ENCODE measurements at regions of chr17 and their contacts with region 1.

Region 1: DNA sequence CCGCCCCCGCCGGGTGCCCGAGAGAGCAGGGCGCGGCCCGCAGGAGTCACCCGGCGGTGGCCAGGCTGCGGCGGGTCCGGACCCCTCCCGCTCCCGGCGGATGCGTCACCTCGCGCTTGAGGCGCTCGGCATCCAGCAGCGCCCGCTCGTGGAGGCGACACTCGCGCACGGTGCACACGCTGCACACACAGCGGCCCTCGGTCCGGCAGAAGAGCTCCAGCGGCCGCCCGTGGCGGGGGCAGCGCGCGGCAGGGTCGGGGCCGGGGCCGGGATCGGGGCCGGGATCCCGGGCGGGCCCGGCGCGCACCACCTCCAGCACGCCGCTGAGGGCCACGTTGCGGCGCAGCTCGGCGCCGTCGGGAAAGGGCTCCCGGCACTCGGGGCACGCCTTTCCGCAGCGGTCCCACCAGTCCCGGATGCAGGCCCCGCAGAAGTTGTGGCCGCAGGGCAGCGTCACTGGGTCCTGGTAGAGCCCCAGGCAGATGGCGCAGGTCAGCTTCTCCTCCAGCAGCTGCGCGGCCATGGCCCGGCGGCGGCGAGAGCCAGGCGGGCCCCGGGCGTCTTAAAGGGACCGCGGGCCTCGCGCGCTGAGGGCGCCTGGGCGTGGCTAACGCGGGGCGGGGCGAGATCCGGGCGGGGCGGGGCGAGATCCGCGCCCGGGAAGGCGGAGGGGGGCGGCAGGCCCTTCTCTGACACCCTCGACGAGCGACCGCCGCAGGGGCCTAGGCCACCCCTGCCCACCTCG is at the start of gene TRIM65:
- DNase-seq: peak; percentile 69
- H3K4me3 ChIP-seq: peak within 1 kb of the TSS; percentile 50 to 58 (median 57)
- H3K27ac ChIP-seq: peak within 1 kb of the TSS; percentile 67
- H3K4me1 ChIP-seq: peaks cover 11% of the 10 kb centered on the region
- H3K27me3 ChIP-seq: no peaks in the 10 kb centered on the region
- CTCF ChIP-seq: peak; percentile 31 to 42
- POLR2A ChIP-seq: peak; percentile 79
- total RNA-seq, gene TRIM65: 28.1 and 33.5 TPM in 2 replicates

Region 2: GRCh38 chr17:75764711-75765421 is 131.7 kb before region 1 on chr17 and contains the start of gene GALK1:
- CTCF ChIA-PET with region 1: interaction called, 15 read pairs
- POLR2A ChIA-PET with region 1: no interaction called
- dilution Hi-C with region 1: no loop called
- intact Hi-C with region 1: no loop called
- DNase-seq: peak; percentile 66
- H3K4me3 ChIP-seq: peak within 1 kb of the TSS; percentile 44 to 62 (median 53)
- H3K27ac ChIP-seq: peak within 1 kb of the TSS; percentile 15
- H3K4me1 ChIP-seq: peaks cover 11% of the 10 kb centered on the region
- H3K27me3 ChIP-seq: no peaks in the 10 kb centered on the region
- CTCF ChIP-seq: peak in 1 of 2 donors; percentile 71
- POLR2A ChIP-seq: peak; percentile 34
- total RNA-seq, gene GALK1: 45.8 and 47.0 TPM in 2 replicates

Region 3: DNA sequence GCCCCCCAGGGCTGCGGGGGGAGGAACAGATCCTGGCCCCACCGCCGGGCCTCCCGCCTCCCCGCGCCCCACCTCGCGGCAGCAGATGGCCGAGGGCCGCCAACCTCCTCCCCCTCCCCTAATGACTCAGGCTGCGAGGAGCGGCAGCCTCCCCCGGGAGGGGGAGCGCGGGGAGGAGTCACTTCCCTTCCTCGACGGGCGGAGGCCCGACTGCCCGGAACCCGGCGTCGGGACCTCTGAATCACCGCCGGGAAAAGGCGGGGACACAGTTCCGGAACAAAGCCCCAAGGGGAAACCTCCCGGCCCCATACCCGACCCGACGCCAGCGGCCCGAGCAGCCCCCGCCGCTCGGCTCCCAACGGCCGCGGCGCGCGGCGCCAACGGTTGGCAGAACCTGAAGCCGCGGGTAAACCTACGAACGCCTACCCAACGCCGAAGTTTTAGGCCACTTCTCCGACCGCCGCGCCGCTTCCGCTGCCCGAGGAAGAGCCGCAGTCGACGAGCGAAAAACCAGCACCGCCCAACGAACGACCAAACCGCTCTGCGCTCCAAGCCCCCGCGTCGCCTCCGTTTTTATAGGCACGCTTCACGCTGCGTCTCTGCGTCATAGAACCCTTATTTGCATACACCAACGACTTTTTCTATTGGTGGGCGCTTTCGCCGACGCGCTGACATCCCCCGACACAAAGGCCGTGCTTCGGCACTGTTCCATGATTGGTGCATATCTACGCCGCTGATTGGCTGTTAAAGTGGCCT is 117.2 kb before region 1 on chr17:
- CTCF ChIA-PET with region 1: interaction called, 5 read pairs
- POLR2A ChIA-PET with region 1: interaction called, 4 read pairs
- dilution Hi-C with region 1: no loop called
- intact Hi-C with region 1: loop called (anchors 5 kb)
- DNase-seq: peak; percentile 100
- H3K4me3 ChIP-seq: peak overlapping the region; percentile 61 to 87 (median 72)
- H3K27ac ChIP-seq: peak overlapping the region; percentile 93
- H3K4me1 ChIP-seq: peaks cover 24% of the 10 kb centered on the region
- H3K27me3 ChIP-seq: no peaks in the 10 kb centered on the region
- CTCF ChIP-seq: no peak
- POLR2A ChIP-seq: peak; percentile 100

Region 4: DNA sequence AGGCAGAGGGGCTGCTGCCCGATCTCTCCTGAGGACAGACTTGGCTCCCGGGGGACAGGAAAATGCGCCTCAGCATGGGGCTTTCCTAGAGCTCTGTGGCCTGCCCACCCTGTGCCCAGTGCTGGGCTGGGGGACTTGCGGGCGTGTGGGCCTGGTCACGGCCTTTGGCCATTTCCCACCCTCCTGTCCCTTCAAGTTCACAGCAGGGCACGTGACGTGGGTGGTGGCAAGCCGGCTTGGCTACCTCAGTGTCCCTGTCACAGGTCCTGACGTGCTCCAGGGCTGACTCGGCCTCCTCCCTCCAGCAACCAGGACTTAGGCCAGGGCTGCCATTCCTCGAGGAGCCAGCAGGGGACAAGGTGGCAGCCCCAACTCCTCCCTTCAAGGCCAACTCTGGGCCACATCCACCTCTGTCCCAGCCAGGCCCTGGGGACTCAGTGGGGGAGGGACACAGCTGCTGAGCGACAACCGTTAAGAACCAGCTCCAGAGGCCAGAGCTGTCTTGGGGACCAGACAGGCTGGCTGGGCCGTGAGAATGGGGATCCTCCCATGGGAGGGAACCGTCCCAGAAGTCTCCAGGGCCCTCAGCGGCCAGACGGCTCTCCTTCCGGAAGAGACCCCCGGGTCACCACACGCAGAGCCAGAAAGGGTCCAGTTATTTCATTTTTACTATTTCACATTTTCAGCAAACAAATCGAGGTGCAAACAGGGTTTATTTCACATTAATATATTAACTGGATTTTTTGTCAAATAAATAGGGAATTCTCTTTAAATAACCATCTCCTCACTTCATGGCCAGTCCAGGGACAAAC is 51.3 kb before region 1 on chr17:
- CTCF ChIA-PET with region 1: interaction called, 9 read pairs
- POLR2A ChIA-PET with region 1: no interaction called
- dilution Hi-C with region 1: no loop called
- intact Hi-C with region 1: loop called (anchors 2 kb)
- DNase-seq: peak; percentile 70
- H3K4me3 ChIP-seq: no peak overlapping the region
- H3K27ac ChIP-seq: peak overlapping the region; percentile 31
- H3K4me1 ChIP-seq: peaks cover 39% of the 10 kb centered on the region
- H3K27me3 ChIP-seq: no peaks in the 10 kb centered on the region
- CTCF ChIP-seq: peak; percentile 79 to 87
- POLR2A ChIP-seq: no peak

Region 5: GRCh38 chr17:75855310-75856081 is 41.1 kb before region 1 on chr17 and contains the start of gene WBP2:
- CTCF ChIA-PET with region 1: interaction called, 42 read pairs
- POLR2A ChIA-PET with region 1: interaction called, 6 read pairs
- dilution Hi-C with region 1: no loop called
- intact Hi-C with region 1: loop called (anchors 2 kb)
- DNase-seq: peak; percentile 100
- H3K4me3 ChIP-seq: peak within 1 kb of the TSS; percentile 19 to 76 (median 75)
- H3K27ac ChIP-seq: peak within 1 kb of the TSS; percentile 89
- H3K4me1 ChIP-seq: peaks cover 39% of the 10 kb centered on the region
- H3K27me3 ChIP-seq: no peaks in the 10 kb centered on the region
- CTCF ChIP-seq: peak; percentile 42 to 54
- POLR2A ChIP-seq: peak; percentile 81
- total RNA-seq, gene WBP2: 120 and 126 TPM in 2 replicates

Region 6: DNA sequence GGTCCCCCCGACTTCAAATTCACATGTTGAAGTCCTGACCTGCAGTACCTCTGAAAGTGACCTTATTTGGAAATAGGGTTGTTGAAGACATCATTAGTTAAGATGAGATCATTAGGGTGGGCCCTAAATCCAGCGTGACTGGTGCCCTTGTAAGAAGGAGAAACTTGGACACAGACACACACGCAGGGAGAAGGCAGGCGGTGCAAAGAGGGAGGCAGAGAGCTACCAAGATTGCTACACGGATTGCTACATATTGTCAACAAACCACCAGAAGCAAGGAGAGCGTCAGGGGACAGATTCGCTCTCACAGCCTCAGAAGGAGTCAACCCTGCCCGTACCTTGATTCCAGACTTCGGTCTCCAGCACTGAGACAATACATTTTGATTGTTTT is 34.7 kb before region 1 on chr17:
- CTCF ChIA-PET with region 1: interaction called, 42 read pairs
- POLR2A ChIA-PET with region 1: no interaction called
- dilution Hi-C with region 1: no loop called
- intact Hi-C with region 1: no loop called
- DNase-seq: no peak
- H3K4me3 ChIP-seq: no peak overlapping the region
- H3K27ac ChIP-seq: no peak overlapping the region
- H3K4me1 ChIP-seq: peaks cover 10% of the 10 kb centered on the region
- H3K27me3 ChIP-seq: no peaks in the 10 kb centered on the region
- CTCF ChIP-seq: no peak
- POLR2A ChIP-seq: no peak

Region 7: DNA sequence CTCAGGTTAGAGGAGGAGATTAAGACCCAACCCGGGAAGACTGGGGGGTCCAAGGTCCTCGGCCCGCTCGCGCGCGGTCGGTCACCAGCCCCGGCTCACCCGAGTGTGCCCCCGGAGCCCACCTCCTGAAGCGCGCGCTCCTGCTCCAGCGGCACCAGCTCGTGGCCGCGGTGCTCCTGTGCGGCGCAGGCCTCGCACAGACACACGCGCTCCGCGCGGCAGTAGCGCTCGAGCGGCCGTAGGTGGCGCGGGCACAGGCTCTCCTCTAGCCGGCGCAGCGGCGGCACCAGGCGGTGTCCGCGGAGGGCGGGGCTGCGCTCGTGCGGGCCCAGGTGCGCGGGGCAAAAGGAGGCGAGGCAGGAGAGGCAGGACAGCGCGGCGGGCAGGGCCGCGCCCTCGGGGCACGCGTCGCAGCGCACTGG is 18.8 kb before region 1 on chr17:
- CTCF ChIA-PET with region 1: interaction called, 32 read pairs
- POLR2A ChIA-PET with region 1: no interaction called
- dilution Hi-C with region 1: no loop called
- intact Hi-C with region 1: loop called (anchors 1 kb)
- DNase-seq: peak; percentile 74
- H3K4me3 ChIP-seq: peak overlapping the region; percentile 1 to 67 (median 66)
- H3K27ac ChIP-seq: peak overlapping the region; percentile 70
- H3K4me1 ChIP-seq: peaks cover 34% of the 10 kb centered on the region
- H3K27me3 ChIP-seq: no peaks in the 10 kb centered on the region
- CTCF ChIP-seq: peak; percentile 33 to 66
- POLR2A ChIP-seq: no peak

Measured in endothelial cell of umbilical vein (primary cell).